Activated naive CD4-positive, alpha-beta T cell treated with anti-CD3 and anti-CD28 coated beads for 36 hours (primary cell): ENCODE measurements at regions of chr4 and their contacts with region 1.

Region 1: GRCh38 chr4:38132107-38132673 is 172.0 kb downstream of the PTTG2 start:
- DNase-seq: peak; percentile 89
- H3K4me3 Mint-ChIP-seq: no peak overlapping the region
- H3K27ac Mint-ChIP-seq: peak overlapping the region; percentile 94
- H3K4me1 Mint-ChIP-seq: peaks cover 62% of the 10 kb centered on the region
- H3K27me3 Mint-ChIP-seq: no peaks in the 10 kb centered on the region

Region 2: GRCh38 chr4:37715889-37716402 is 416.2 kb before region 1 on chr4:
- CTCF ChIA-PET with region 1: no interaction called
- intact Hi-C with region 1: loop called (anchors 1 kb)
- DNase-seq: peak; percentile 80
- H3K4me3 Mint-ChIP-seq: no peak overlapping the region
- H3K27ac Mint-ChIP-seq: peak overlapping the region; percentile 77
- H3K4me1 Mint-ChIP-seq: peaks cover 17% of the 10 kb centered on the region
- H3K27me3 Mint-ChIP-seq: peaks cover 4% of the 10 kb centered on the region

Region 3: GRCh38 chr4:38078590-38079421 is 53.4 kb before region 1 on chr4:
- CTCF ChIA-PET with region 1: interaction called, 6 read pairs
- intact Hi-C with region 1: loop called (anchors 1 kb)
- DNase-seq: peak; percentile 21
- H3K4me3 Mint-ChIP-seq: no peak overlapping the region
- H3K27ac Mint-ChIP-seq: peak overlapping the region; percentile 57
- H3K4me1 Mint-ChIP-seq: peaks cover 31% of the 10 kb centered on the region
- H3K27me3 Mint-ChIP-seq: no peaks in the 10 kb centered on the region

Region 4: GRCh38 chr4:38334810-38335537 is 202.8 kb after region 1 on chr4:
- CTCF ChIA-PET with region 1: no interaction called
- intact Hi-C with region 1: loop called (anchors 1 kb)
- DNase-seq: no peak
- H3K4me3 Mint-ChIP-seq: no peak overlapping the region
- H3K27ac Mint-ChIP-seq: no peak overlapping the region
- H3K4me1 Mint-ChIP-seq: peaks cover 52% of the 10 kb centered on the region
- H3K27me3 Mint-ChIP-seq: no peaks in the 10 kb centered on the region

Region 5: GRCh38 chr4:38675146-38676121 is 543.2 kb after region 1 on chr4:
- CTCF ChIA-PET with region 1: no interaction called
- intact Hi-C with region 1: no loop called
- DNase-seq: peak; percentile 95
- H3K4me3 Mint-ChIP-seq: peak overlapping the region; percentile 71
- H3K27ac Mint-ChIP-seq: peak overlapping the region; percentile 82
- H3K4me1 Mint-ChIP-seq: peaks cover 85% of the 10 kb centered on the region
- H3K27me3 Mint-ChIP-seq: no peaks in the 10 kb centered on the region

Region 6: GRCh38 chr4:38804654-38805295 is 672.6 kb after region 1 on chr4 and contains the start of gene TLR1:
- CTCF ChIA-PET with region 1: no interaction called
- intact Hi-C with region 1: loop called (anchors 1 kb)
- DNase-seq: peak; percentile 30
- H3K4me3 Mint-ChIP-seq: peak within 1 kb of the TSS; percentile 69
- H3K27ac Mint-ChIP-seq: peak within 1 kb of the TSS; percentile 90
- H3K4me1 Mint-ChIP-seq: peaks cover 30% of the 10 kb centered on the region
- H3K27me3 Mint-ChIP-seq: no peaks in the 10 kb centered on the region
- total RNA-seq, gene TLR1: 4.0 to 4.2 TPM

Region 7: GRCh38 chr4:39181905-39182638 is 1049.9 kb after region 1 on chr4 and contains the start of gene WDR19:
- CTCF ChIA-PET with region 1: no interaction called
- intact Hi-C with region 1: loop called (anchors 5 kb)
- DNase-seq: peak; percentile 99
- H3K4me3 Mint-ChIP-seq: no peak within 1 kb of the TSS
- H3K27ac Mint-ChIP-seq: no peak within 1 kb of the TSS
- H3K4me1 Mint-ChIP-seq: peaks cover 6% of the 10 kb centered on the region
- H3K27me3 Mint-ChIP-seq: no peaks in the 10 kb centered on the region
- total RNA-seq, gene WDR19: 12.9 to 18.9 TPM